ENCODE measurements at regions of chr1 and their contacts with region 1.

Region 1: GRCh38 chr1:91885716-91886506 is at the start of gene TGFBR3:
- DNase-seq: peak; percentile 93 to 97
- ATAC-seq: peak; percentile 97
- H3K4me3 ChIP-seq: peak within 1 kb of the TSS; percentile 74 to 87
- H3K27ac ChIP-seq: peak within 1 kb of the TSS; percentile 5 to 84
- H3K4me1 ChIP-seq: no peaks in the 10 kb centered on the region
- H3K27me3 ChIP-seq: no peaks in the 10 kb centered on the region
- total RNA-seq, gene TGFBR3: 50.6 to 81.5 TPM

Region 2: DNA sequence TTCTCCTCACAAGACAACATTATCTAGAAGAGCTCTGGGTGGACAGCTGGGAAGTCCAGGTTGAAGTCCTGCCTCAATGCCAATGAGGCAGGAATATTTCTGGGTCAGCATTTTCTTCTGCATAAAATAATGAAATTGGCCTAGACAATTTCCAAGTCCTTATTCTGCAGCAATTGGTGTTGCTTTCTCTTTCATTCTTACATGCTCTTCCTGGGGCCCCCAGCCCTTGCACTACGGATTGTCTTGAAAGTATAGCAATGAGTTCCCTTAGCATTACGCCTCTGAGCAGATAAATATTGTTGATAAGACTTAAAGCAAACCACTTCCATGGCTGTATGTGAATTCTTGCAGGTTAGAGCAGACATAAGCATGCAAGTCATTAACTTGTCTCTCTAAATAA is 188.5 kb before region 1 on chr1:
- intact Hi-C with region 1: loop called in 1 of 2 experiments (anchors 5 kb)
- DNase-seq: no peak
- ATAC-seq: no peak
- H3K4me3 ChIP-seq: no peak overlapping the region
- H3K27ac ChIP-seq: no peak overlapping the region
- H3K4me1 ChIP-seq: peaks cover 2 to 5% of the 10 kb centered on the region in 2 donors
- H3K27me3 ChIP-seq: no peaks in the 10 kb centered on the region

Region 3: DNA sequence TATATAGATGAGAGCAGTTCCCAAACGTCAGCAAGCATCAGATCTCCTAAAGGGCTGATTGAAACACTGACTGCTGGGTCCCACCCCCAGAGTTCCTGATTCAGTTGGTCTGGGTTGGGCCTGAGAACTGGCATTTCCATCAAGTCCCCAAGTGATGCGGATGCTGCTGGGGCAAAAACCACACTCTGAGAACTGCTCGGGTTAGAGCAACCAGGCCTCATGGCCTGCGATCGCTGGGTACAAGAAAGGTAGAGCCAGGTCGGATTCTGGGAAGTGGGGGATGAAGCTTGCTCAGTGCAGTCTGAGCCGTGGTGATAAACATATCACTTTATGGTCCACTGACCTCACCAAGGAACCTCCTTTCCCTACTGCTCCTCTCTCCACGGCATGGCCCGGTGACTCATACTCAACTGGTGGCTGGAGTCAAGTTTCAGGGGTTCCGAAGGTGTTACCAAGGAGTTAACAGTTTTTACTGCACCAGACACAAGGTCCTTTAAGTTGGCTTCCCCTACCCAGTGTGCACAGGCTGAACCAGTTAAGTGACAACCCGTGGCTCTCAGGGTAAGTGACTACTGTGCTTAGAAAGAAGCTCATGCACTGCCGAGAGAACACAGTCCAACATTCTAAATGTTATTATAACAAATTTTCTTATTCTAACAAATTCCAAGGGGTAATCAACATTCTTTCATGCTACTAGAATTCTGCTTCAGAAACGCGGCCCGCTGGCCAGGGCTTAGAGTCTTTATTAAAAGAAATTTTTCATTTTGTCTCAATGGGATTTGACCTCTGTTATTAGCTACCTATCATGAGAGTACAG is 153.4 kb before region 1 on chr1:
- intact Hi-C with region 1: loop called in 1 of 2 experiments (anchors 5 kb)
- DNase-seq: no peak
- ATAC-seq: peak; percentile 33
- H3K4me3 ChIP-seq: no peak overlapping the region
- H3K27ac ChIP-seq: no peak overlapping the region
- H3K4me1 ChIP-seq: peaks cover 3 to 8% of the 10 kb centered on the region in 2 donors
- H3K27me3 ChIP-seq: no peaks in the 10 kb centered on the region

Region 4: DNA sequence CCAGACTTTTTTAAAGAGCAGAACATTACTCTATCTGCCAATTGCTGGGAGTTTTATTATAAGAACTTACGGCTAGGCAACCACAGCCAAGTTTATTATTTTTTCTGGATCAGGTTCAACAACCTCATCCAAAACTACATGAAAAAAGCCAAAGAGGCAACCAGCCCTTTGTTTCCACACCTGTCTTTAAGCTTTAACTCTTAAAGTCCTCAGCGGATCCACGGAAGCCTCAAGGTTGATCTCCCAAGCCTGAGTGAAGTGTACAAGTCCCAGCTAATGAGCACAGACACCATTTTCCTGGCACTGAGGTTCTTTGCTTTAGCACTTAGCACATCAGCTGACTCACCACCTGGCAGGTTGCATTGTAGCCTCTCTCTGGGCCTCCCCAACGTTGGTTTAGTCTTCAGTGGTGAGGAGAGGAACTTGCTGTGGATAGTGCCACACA is 143.0 kb before region 1 on chr1:
- intact Hi-C with region 1: loop called (anchors 5 kb)
- DNase-seq: peak; percentile 79 to 87
- ATAC-seq: peak; percentile 33
- H3K4me3 ChIP-seq: no peak overlapping the region
- H3K27ac ChIP-seq: peak overlapping the region in 1 of 2 donors; percentile 43
- H3K4me1 ChIP-seq: peaks cover 0 to 17% of the 10 kb centered on the region in 2 donors
- H3K27me3 ChIP-seq: no peaks in the 10 kb centered on the region

Region 5: GRCh38 chr1:91803847-91804545 is 81.9 kb before region 1 on chr1:
- intact Hi-C with region 1: no loop called
- DNase-seq: no peak
- ATAC-seq: peak; percentile 9
- H3K4me3 ChIP-seq: no peak overlapping the region
- H3K27ac ChIP-seq: no peak overlapping the region
- H3K4me1 ChIP-seq: peaks cover 0 to 1% of the 10 kb centered on the region in 2 donors
- H3K27me3 ChIP-seq: no peaks in the 10 kb centered on the region

Region 6: GRCh38 chr1:91864017-91864700 is 21.8 kb before region 1 on chr1:
- intact Hi-C with region 1: no loop called
- DNase-seq: no peak
- ATAC-seq: no peak
- H3K4me3 ChIP-seq: no peak overlapping the region
- H3K27ac ChIP-seq: no peak overlapping the region
- H3K4me1 ChIP-seq: peaks cover 0 to 2% of the 10 kb centered on the region in 2 donors
- H3K27me3 ChIP-seq: no peaks in the 10 kb centered on the region

Region 7: DNA sequence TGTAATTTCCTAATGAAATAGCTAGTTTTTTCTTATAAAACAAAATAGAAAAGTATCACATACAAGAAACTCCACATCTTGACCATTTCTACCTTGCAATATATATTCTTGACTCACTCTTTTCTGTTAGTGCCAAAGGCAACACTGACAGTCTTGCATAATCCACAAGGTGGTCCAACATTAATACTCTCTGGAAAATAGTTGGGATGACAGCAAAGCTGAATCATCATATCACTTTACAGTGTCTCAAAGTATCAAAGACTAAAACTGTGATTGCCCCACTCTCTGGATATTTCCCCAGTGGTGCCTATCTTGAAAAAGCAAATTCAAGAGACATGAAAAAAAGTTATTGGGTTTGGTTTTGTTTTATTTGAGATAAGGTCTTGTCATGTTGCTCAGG is 14.6 kb after region 1 on chr1:
- intact Hi-C with region 1: no loop called
- DNase-seq: no peak
- ATAC-seq: no peak
- H3K4me3 ChIP-seq: no peak overlapping the region
- H3K27ac ChIP-seq: no peak overlapping the region
- H3K4me1 ChIP-seq: no peaks in the 10 kb centered on the region
- H3K27me3 ChIP-seq: no peaks in the 10 kb centered on the region

Region 8: GRCh38 chr1:92511541-92511940 is 625.6 kb after region 1 on chr1:
- intact Hi-C with region 1: no loop called
- DNase-seq: no peak
- ATAC-seq: no peak
- H3K4me3 ChIP-seq: no peak overlapping the region
- H3K27ac ChIP-seq: no peak overlapping the region
- H3K4me1 ChIP-seq: no peaks in the 10 kb centered on the region
- H3K27me3 ChIP-seq: no peaks in the 10 kb centered on the region